Kidney (tissue), 22 donors: ENCODE measurements at regions of chr12 and their contacts with region 1.

Region 1: DNA sequence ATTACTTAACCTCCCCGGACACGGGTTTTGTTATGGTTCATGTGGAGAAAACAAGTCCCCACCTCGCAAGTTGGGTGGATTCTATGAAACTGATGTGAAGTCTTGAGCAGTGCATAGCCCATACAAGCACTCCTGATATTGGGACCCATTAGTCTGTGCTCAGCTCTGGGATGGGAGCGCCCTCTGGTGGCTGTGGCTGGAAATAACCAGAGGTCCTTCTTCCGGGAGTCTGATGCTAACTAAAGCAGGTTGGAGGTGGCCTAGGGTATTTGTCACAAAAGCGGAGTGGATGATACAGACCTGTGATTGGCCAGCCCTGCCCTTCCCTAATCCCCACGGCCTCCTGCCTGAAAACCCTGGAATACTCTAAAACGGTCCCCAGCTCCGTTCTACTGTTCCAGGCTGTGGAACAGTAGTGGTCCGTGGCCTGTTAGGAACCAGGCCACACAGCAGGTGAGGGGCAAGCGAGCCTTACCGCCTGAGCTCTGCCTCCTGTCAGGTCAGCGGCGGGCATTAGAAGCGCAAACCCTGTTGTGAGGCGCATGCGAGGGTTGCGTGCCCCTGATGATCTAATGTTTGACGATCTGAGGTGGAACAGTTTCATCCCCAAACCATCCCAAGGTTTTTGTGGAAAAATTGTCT is 6.4 kb downstream of the SLC48A1 start:
- DNase-seq: peak; percentile 92 to 95 (median 95)
- H3K4me3 ChIP-seq: no peak overlapping the region
- H3K27ac ChIP-seq: no peak overlapping the region
- H3K4me1 ChIP-seq: peaks cover 0 to 34% (median 11%) of the 10 kb centered on the region in 3 donors
- H3K27me3 ChIP-seq: no peaks in the 10 kb centered on the region
- CTCF ChIP-seq: peak; percentile 96

Region 2: DNA sequence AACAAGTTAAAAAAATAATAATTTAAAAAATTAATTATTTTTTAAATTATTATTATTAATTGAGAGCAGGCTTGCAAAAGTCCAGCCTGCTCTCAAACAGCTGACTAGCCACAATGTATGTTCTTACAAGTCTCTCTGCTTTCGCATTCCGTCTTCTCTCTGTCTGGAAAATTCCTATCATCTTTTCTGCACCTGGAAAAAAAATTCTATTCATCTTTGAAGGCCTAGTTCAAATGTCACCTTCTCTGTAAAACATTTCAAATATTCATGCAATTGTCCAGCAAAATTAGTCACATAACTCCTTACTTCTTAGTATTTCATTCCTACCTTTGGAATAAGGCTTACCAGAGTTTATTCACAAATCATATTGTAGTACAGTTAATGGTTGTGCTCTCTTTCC is 149.1 kb before region 1 on chr12:
- intact Hi-C with region 1: no loop called
- DNase-seq: no peak
- H3K4me3 ChIP-seq: no peak overlapping the region
- H3K27ac ChIP-seq: no peak overlapping the region
- H3K4me1 ChIP-seq: no peaks in the 10 kb centered on the region
- H3K27me3 ChIP-seq: no peaks in the 10 kb centered on the region
- CTCF ChIP-seq: no peak

Region 3: DNA sequence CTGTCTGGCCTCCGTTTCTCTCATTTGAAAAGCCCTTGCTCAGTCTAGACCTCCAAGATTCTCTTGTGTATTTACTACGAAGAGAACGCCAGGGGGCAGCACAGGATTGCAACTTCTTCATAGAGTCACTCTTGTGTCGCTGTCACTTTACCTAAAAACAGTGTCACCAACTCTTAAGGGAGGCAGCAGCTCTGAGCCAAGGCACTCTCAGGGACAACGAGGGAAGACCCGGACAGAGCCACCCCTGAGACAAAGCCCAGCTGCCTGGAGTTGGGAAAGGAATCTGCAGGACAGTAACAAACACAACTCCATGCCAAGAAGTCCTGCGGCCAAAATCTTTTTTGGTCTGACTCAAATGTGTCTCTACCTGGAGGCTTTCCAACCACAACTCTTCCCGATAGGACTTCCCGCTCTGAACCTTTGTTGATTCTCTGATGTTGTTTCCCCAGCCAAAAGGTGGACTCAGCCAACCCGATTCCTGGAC is 64.0 kb before region 1 on chr12:
- intact Hi-C with region 1: loop called (anchors 5 kb)
- DNase-seq: peak; percentile 79 to 94 (median 80)
- H3K4me3 ChIP-seq: no peak overlapping the region
- H3K27ac ChIP-seq: no peak overlapping the region
- H3K4me1 ChIP-seq: peaks cover 0 to 13% (median 5%) of the 10 kb centered on the region in 3 donors
- H3K27me3 ChIP-seq: no peaks in the 10 kb centered on the region
- CTCF ChIP-seq: peak; percentile 77